ENCODE measurements at regions of chr7 and their contacts with region 1.

Region 1: GRCh38 chr7:816300-816750 is 16.0 kb upstream of the SUN1 start:
- DNase-seq: peak; percentile 97
- ATAC-seq: peak; percentile 97
- H3K4me3 Mint-ChIP-seq: peak overlapping the region; percentile 67
- H3K27ac Mint-ChIP-seq: no peak overlapping the region
- H3K4me1 Mint-ChIP-seq: peaks cover 55% of the 10 kb centered on the region
- H3K27me3 Mint-ChIP-seq: peaks cover 15% of the 10 kb centered on the region
- CTCF ChIP-seq: no peak

Region 2: GRCh38 chr7:831596-832166 is 15.4 kb after region 1 on chr7:
- CTCF ChIA-PET with region 1: interaction called, 11 read pairs
- POLR2A ChIA-PET with region 1: interaction called, 14 read pairs
- intact Hi-C with region 1: no loop called
- DNase-seq: peak; percentile 41
- ATAC-seq: peak; percentile 65
- H3K4me3 Mint-ChIP-seq: peak overlapping the region; percentile 65
- H3K27ac Mint-ChIP-seq: peak overlapping the region; percentile 98
- H3K4me1 Mint-ChIP-seq: peaks cover 56% of the 10 kb centered on the region
- H3K27me3 Mint-ChIP-seq: no peaks in the 10 kb centered on the region
- CTCF ChIP-seq: no peak

Region 3: GRCh38 chr7:897771-898376 is 81.5 kb after region 1 on chr7:
- CTCF ChIA-PET with region 1: no interaction called
- POLR2A ChIA-PET with region 1: no interaction called
- intact Hi-C with region 1: no loop called
- DNase-seq: no peak
- ATAC-seq: no peak
- H3K4me3 Mint-ChIP-seq: no peak overlapping the region
- H3K27ac Mint-ChIP-seq: no peak overlapping the region
- H3K4me1 Mint-ChIP-seq: no peaks in the 10 kb centered on the region
- H3K27me3 Mint-ChIP-seq: no peaks in the 10 kb centered on the region
- CTCF ChIP-seq: no peak

Region 4: DNA sequence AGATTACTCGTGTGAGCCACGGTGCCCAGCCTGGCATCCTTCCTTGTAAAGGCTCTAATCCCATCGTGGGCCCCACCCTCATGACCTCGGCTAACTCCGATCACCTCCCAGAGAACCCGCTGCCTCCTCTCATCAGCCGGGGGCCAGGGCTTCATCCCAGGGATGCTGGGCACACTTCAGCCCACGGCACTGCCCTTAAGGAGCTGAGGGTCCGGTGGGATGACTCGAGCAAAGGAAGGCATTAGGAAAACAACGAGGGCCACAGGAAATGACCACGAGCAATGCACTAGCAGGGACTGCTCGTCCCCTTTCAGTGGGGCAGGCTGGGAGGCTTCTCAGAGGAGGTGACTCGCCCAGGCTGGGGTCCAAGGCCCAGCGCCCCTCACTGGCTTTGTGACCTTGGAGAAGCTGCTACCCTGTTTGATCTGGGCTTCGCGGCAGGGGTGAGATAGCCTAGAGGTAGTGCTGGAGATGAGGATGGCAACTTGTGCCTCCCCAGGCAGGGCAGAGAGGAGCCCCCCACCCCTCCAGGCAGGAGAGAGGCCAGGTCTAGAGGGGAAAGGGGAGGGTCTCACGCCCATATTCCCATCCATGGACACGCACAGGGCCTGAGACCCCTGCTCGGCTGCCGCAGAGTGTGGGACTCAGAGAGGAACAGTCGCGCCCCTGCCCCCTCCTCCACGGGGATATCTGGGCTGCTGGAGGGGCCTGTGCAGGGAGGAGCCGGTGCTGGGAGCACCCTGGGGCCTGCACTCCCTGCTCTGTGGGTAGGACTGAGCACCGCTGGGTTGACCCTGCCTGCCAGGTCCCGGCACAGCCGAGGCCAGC is 880.6 kb after region 1 on chr7:
- CTCF ChIA-PET with region 1: no interaction called
- POLR2A ChIA-PET with region 1: no interaction called
- intact Hi-C with region 1: no loop called
- DNase-seq: no peak
- ATAC-seq: no peak
- H3K4me3 Mint-ChIP-seq: no peak overlapping the region
- H3K27ac Mint-ChIP-seq: no peak overlapping the region
- H3K4me1 Mint-ChIP-seq: no peaks in the 10 kb centered on the region
- H3K27me3 Mint-ChIP-seq: no peaks in the 10 kb centered on the region
- CTCF ChIP-seq: no peak